ENCODE measurements at regions of chr16 and their contacts with region 1.

Region 1: GRCh38 chr16:57648590-57649442 is 19.3 kb upstream of the ADGRG3 start:
- DNase-seq: peak; percentile 80
- H3K4me3 Mint-ChIP-seq: no peak overlapping the region
- H3K27ac Mint-ChIP-seq: peak overlapping the region; percentile 48
- H3K4me1 Mint-ChIP-seq: peaks cover 23% of the 10 kb centered on the region
- H3K27me3 Mint-ChIP-seq: peaks cover 2% of the 10 kb centered on the region

Region 2: GRCh38 chr16:56985288-56985961 is 663.4 kb before region 1 on chr16:
- intact Hi-C with region 1: no loop called
- DNase-seq: no peak
- H3K4me3 Mint-ChIP-seq: peak overlapping the region; percentile 14
- H3K27ac Mint-ChIP-seq: peak overlapping the region; percentile 76
- H3K4me1 Mint-ChIP-seq: peaks cover 67% of the 10 kb centered on the region
- H3K27me3 Mint-ChIP-seq: no peaks in the 10 kb centered on the region

Region 3: GRCh38 chr16:57600048-57600835 is 48.6 kb before region 1 on chr16:
- intact Hi-C with region 1: loop called (anchors 1 kb)
- DNase-seq: no peak
- H3K4me3 Mint-ChIP-seq: no peak overlapping the region
- H3K27ac Mint-ChIP-seq: no peak overlapping the region
- H3K4me1 Mint-ChIP-seq: peaks cover 49% of the 10 kb centered on the region
- H3K27me3 Mint-ChIP-seq: peaks cover 7% of the 10 kb centered on the region

Region 4: GRCh38 chr16:57609541-57610401 is 39.0 kb before region 1 on chr16:
- intact Hi-C with region 1: loop called (anchors 2 kb)
- DNase-seq: peak; percentile 74
- H3K4me3 Mint-ChIP-seq: peak overlapping the region; percentile 58
- H3K27ac Mint-ChIP-seq: peak overlapping the region; percentile 87
- H3K4me1 Mint-ChIP-seq: peaks cover 60% of the 10 kb centered on the region
- H3K27me3 Mint-ChIP-seq: no peaks in the 10 kb centered on the region

Region 5: DNA sequence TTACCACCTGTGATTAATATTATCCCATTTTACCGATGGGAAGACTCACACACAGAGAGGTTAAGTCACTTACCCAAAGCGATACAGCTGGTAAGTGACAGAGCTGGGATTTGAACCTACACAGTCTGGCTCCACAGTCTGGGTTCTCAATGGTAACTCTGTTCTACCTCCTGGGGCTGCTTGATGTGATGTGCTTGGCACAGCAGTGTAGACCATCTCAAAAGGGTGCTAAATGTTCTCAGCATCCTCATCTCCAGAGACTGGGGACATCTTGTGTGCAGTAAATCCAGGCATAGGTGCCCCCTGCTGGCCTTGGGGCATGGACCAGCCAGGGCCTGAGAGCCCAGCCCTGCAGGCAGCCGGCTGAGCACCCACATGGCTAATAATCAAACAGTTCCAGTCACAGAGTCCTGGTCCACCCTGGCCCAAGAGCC is 71.3 kb after region 1 on chr16:
- intact Hi-C with region 1: loop called (anchors 5 kb)
- DNase-seq: peak; percentile 33
- H3K4me3 Mint-ChIP-seq: no peak overlapping the region
- H3K27ac Mint-ChIP-seq: no peak overlapping the region
- H3K4me1 Mint-ChIP-seq: no peaks in the 10 kb centered on the region
- H3K27me3 Mint-ChIP-seq: peaks cover 2% of the 10 kb centered on the region

Region 6: DNA sequence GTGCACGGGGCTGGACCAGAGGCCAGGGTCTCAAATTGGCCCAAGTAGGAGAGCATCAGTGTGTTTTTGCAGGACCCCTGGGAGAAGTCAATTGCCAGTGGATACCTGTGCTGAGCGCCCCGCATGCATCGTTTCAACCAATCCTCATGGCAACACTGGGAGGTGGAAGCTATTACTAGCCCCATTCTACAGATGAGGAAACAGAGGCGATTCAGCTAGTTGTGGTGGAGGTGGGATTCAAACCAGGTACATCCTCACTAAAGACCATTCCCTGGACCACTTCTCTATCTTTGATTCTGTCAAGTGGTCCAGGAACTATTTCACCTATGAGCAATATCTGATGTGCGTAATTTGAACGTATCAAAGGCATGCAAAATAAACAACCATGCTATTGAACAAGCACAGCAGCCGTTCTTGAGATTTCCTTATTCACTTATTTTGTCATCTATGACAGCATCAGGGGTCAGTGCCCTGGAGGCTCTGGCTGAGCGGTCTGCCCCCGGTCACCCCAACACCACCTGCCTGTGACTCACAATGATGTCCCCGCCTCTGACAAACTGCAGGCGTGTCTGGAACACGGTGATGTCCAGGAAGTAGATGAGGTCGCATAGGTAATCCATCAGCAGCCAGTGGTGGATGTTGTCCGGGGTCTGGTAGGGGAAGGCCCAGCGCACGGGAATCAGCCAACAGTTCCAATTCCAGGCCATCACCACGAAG is 268.1 kb after region 1 on chr16:
- intact Hi-C with region 1: no loop called
- DNase-seq: no peak
- H3K4me3 Mint-ChIP-seq: no peak overlapping the region
- H3K27ac Mint-ChIP-seq: no peak overlapping the region
- H3K4me1 Mint-ChIP-seq: no peaks in the 10 kb centered on the region
- H3K27me3 Mint-ChIP-seq: no peaks in the 10 kb centered on the region

Region 7: DNA sequence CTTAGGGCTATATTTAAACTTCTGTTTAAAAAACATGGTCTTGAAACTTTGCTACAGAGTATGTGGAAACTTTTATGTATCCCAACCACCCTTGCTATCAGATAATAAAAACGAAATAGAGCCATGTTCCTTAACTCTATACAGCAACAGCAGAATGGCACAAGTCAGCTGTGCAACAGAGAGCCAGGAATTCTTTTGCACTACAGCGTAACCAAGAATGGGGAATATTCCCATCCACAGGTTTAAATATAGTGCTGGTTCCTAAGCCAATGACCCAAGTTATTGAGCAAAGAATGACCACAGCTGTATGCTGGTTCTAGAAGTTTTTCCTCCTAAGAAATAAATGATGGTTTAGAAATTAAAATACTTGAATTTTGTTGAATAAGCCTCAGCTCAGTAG is 899.6 kb after region 1 on chr16:
- intact Hi-C with region 1: no loop called
- DNase-seq: no peak
- H3K4me3 Mint-ChIP-seq: no peak overlapping the region
- H3K27ac Mint-ChIP-seq: no peak overlapping the region
- H3K4me1 Mint-ChIP-seq: no peaks in the 10 kb centered on the region
- H3K27me3 Mint-ChIP-seq: no peaks in the 10 kb centered on the region